ENCODE measurements at regions of chr11 and their contacts with region 1.

Region 1: GRCh38 chr11:34890812-34891211 is 25.4 kb downstream of the APIP start:
- DNase-seq: peak in 2 of 9 experiments; percentile 30 to 47
- ATAC-seq: no peak
- H3K4me3 ChIP-seq: no peak overlapping the region
- H3K4me3 Mint-ChIP-seq: no peak overlapping the region
- H3K27ac ChIP-seq: no peak overlapping the region
- H3K27ac Mint-ChIP-seq: no peak overlapping the region
- H3K4me1 ChIP-seq: no peaks in the 10 kb centered on the region
- H3K4me1 Mint-ChIP-seq: no peaks in the 10 kb centered on the region
- H3K27me3 ChIP-seq: no peaks in the 10 kb centered on the region
- H3K27me3 Mint-ChIP-seq: no peaks in the 10 kb centered on the region
- CTCF ChIP-seq: peak; percentile 45

Region 2: DNA sequence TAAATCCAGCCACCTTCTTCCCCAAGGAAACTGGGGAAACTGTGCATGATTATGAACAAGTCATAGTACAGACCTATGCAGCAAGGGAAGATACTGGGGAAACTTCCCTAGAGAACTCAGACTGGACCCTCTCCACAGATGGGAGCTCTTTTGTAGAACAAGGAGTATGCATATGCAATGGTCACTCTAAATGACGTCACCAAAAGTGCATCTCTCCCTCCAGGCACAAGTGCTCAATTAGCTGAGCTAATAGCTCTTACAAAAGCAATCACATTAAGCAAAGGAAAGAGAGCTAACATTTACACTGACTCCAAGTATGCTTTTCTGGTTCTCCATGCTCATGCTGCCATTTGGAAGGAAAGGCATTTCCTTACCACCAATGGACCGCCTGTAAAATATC is 12.3 kb after region 1 on chr11:
- CTCF ChIA-PET with region 1: interaction called, 10 read pairs
- POLR2A ChIA-PET with region 1: interaction called, 3 read pairs
- intact Hi-C with region 1: no loop called
- DNase-seq: no peak
- ATAC-seq: no peak
- H3K4me3 ChIP-seq: no peak overlapping the region
- H3K4me3 Mint-ChIP-seq: no peak overlapping the region
- H3K27ac ChIP-seq: no peak overlapping the region
- H3K27ac Mint-ChIP-seq: no peak overlapping the region
- H3K4me1 ChIP-seq: no peaks in the 10 kb centered on the region
- H3K4me1 Mint-ChIP-seq: peaks cover 15% of the 10 kb centered on the region
- H3K27me3 ChIP-seq: no peaks in the 10 kb centered on the region
- H3K27me3 Mint-ChIP-seq: no peaks in the 10 kb centered on the region
- CTCF ChIP-seq: no peak